A549 (cell line): ENCODE measurements at regions of chr6 and their contacts with region 1.

Region 1: GRCh38 chr6:37538107-37538506 is 38.4 kb upstream of the CCDC167 start:
- DNase-seq: peak; percentile 43 to 60
- ATAC-seq: peak; percentile 80 to 93; a peak in 5 of 6 replicates
- H3K4me3 ChIP-seq: no peak overlapping the region
- H3K27ac ChIP-seq: no peak overlapping the region
- H3K4me1 ChIP-seq: no peaks in the 10 kb centered on the region
- CTCF ChIP-seq: peak; percentile 45; the same call in 2 of the 3 replicates
- EP300 ChIP-seq: no peak
- POLR2A ChIP-seq: no peak
- RAD21 ChIP-seq: peak; percentile 63 to 80

Region 2: GRCh38 chr6:37525460-37526357 is 12.4 kb before region 1 on chr6:
- CTCF ChIA-PET with region 1: interaction called, 19 read pairs
- POLR2A ChIA-PET with region 1: no interaction called
- DNase-seq: no peak
- ATAC-seq: peak; percentile 48 to 55; a peak in 2 of 6 replicates
- H3K4me3 ChIP-seq: no peak overlapping the region
- H3K27ac ChIP-seq: no peak overlapping the region
- H3K4me1 ChIP-seq: peaks cover 18% of the 10 kb centered on the region
- CTCF ChIP-seq: no peak
- EP300 ChIP-seq: no peak
- POLR2A ChIP-seq: no peak
- RAD21 ChIP-seq: no peak

Region 3: GRCh38 chr6:37554480-37554819 is 16.3 kb after region 1 on chr6:
- CTCF ChIA-PET with region 1: interaction called, 23 read pairs
- POLR2A ChIA-PET with region 1: no interaction called
- DNase-seq: no peak
- ATAC-seq: peak in 1 of 2 experiments; percentile 38; a peak in 1 of 6 replicates
- H3K4me3 ChIP-seq: no peak overlapping the region
- H3K27ac ChIP-seq: peak overlapping the region; percentile 56 to 80
- H3K4me1 ChIP-seq: peaks cover 35% of the 10 kb centered on the region
- CTCF ChIP-seq: no peak
- EP300 ChIP-seq: no peak
- POLR2A ChIP-seq: no peak
- RAD21 ChIP-seq: no peak